A549 (cell line): ENCODE measurements at regions of chr1 and their contacts with region 1.

Region 1: GRCh38 chr1:44652445-44653106 is 21.7 kb downstream of the TMEM53 start:
- DNase-seq: peak; percentile 60 to 65
- ATAC-seq: peak; percentile 77 to 93
- H3K4me3 ChIP-seq: no peak overlapping the region
- H3K27ac ChIP-seq: no peak overlapping the region
- H3K4me1 ChIP-seq: no peaks in the 10 kb centered on the region
- CTCF ChIP-seq: peak; percentile 71
- EP300 ChIP-seq: no peak
- POLR2A ChIP-seq: no peak
- RAD21 ChIP-seq: peak; percentile 78 to 81

Region 2: GRCh38 chr1:44002606-44003157 is 649.9 kb before region 1 on chr1:
- CTCF ChIA-PET with region 1: interaction called, 13 read pairs
- POLR2A ChIA-PET with region 1: no interaction called
- DNase-seq: no peak
- ATAC-seq: no peak
- H3K4me3 ChIP-seq: no peak overlapping the region
- H3K27ac ChIP-seq: no peak overlapping the region
- H3K4me1 ChIP-seq: peaks cover 4% of the 10 kb centered on the region; the same call in 1 of the 3 replicates
- CTCF ChIP-seq: no peak
- EP300 ChIP-seq: no peak
- POLR2A ChIP-seq: no peak
- RAD21 ChIP-seq: no peak

Region 3: GRCh38 chr1:44318097-44319088 is 334.2 kb before region 1 on chr1:
- CTCF ChIA-PET with region 1: interaction called, 11 read pairs
- POLR2A ChIA-PET with region 1: no interaction called
- DNase-seq: peak; percentile 23 to 61
- ATAC-seq: peak in 1 of 2 experiments; percentile 68; a peak in 3 of 6 replicates
- H3K4me3 ChIP-seq: no peak overlapping the region
- H3K27ac ChIP-seq: no peak overlapping the region
- H3K4me1 ChIP-seq: no peaks in the 10 kb centered on the region
- CTCF ChIP-seq: peak; percentile 73
- EP300 ChIP-seq: no peak
- POLR2A ChIP-seq: no peak
- RAD21 ChIP-seq: peak; percentile 48 to 54; a peak in 3 of 5 replicates

Region 4: GRCh38 chr1:44609412-44609767 is 43.2 kb before region 1 on chr1:
- CTCF ChIA-PET with region 1: interaction called, 24 read pairs
- POLR2A ChIA-PET with region 1: interaction called, 3 read pairs
- DNase-seq: peak in 1 of 2 experiments; percentile 30
- ATAC-seq: peak; percentile 55 to 86; a peak in 3 of 6 replicates
- H3K4me3 ChIP-seq: no peak overlapping the region
- H3K27ac ChIP-seq: no peak overlapping the region
- H3K4me1 ChIP-seq: no peaks in the 10 kb centered on the region
- CTCF ChIP-seq: peak; percentile 26; the same call in 1 of the 3 replicates
- EP300 ChIP-seq: no peak
- POLR2A ChIP-seq: no peak
- RAD21 ChIP-seq: peak in 1 of 2 experiments; percentile 45; a peak in 2 of 5 replicates

Region 5: DNA sequence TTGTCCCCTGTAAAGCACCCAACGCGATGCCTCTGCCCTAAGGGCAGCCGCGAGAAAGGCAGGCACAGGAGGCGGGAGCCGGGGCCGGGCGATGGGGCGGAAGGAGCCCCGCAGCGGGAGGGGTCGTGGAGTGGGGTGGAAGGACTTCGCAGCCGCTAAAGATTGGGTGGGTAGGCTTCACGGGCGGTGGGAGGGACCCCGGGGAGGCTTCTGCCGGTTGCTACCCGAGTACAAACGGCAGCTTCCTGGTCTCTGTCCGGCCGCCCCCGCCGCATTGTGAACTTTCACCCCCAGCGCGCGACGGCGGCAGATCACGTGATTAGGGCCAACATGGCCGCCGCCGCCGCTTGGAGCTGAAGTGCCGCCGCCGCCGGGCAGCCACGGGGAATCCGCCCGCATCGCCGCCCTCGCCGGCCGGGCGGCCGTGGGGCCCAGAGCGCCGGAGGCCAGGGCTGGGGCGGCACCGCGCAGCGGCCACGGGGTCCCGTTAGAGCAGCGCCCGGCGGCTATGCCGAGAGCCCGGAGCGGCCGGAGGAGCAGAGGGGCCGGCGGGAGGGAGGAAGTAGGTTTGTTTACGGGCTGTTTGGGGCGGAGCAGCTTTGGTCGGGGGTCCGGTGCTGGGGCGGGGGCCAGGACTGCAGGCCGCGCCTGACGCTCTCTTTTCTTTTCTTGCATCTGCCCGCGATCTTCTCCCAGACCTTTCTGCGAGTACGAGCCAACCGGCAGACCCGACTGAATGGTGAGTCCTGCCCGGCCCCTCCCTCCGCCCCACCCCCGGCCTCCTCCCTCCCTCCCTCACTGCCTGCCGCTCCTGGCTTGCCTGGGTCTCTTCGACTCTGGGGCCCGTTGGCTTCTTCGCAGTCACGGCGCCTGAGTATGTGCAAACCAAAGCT is 20.7 kb before region 1 on chr1:
- CTCF ChIA-PET with region 1: interaction called, 119 read pairs
- POLR2A ChIA-PET with region 1: interaction called, 4 read pairs
- DNase-seq: peak; percentile 74 to 83
- ATAC-seq: peak; percentile 84 to 86
- H3K4me3 ChIP-seq: peak overlapping the region; percentile 77
- H3K27ac ChIP-seq: peak overlapping the region; percentile 97
- H3K4me1 ChIP-seq: peaks cover 18% of the 10 kb centered on the region; the same call in 1 of the 3 replicates
- CTCF ChIP-seq: no peak
- EP300 ChIP-seq: no peak
- POLR2A ChIP-seq: peak; percentile 30
- RAD21 ChIP-seq: no peak

Region 6: GRCh38 chr1:44674113-44675000 is 21.8 kb after region 1 on chr1 and contains the starts of genes ARMH1 and TMEM53:
- CTCF ChIA-PET with region 1: interaction called, 34 read pairs
- POLR2A ChIA-PET with region 1: interaction called, 9 read pairs
- DNase-seq: peak; percentile 96 to 98
- ATAC-seq: peak; percentile 96 to 97
- H3K4me3 ChIP-seq: peak within 1 kb of the TSS; percentile 57
- H3K27ac ChIP-seq: peak within 1 kb of the TSS; percentile 90 to 95
- H3K4me1 ChIP-seq: peaks cover 25% of the 10 kb centered on the region
- CTCF ChIP-seq: no peak
- EP300 ChIP-seq: no peak
- POLR2A ChIP-seq: peak; percentile 54
- RAD21 ChIP-seq: no peak
- polyA plus RNA-seq, gene ARMH1: 2.7 TPM in 2 replicates
- polyA plus RNA-seq, gene TMEM53: 6.2 and 8.9 TPM in 2 replicates

Region 7: DNA sequence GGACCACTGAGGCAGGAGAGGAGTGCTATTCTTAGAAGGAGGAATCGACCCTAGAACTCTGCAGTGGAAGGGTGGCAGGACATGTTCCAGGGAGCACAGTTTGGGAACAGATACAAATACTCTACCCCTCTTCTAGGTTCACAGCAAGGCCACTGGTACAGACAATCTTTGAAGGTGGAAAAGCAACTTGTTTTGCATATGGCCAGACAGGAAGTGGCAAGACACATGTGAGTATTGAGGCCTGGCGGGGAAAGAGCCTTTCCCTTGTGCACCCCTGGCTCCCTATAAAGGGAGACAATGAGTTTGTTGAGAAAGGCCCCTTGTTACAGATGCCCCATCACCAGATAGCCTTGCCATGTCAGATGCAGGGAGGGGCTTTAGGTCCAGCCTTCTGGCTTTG is 104.8 kb after region 1 on chr1:
- CTCF ChIA-PET with region 1: no interaction called
- POLR2A ChIA-PET with region 1: no interaction called
- DNase-seq: no peak
- ATAC-seq: no peak
- H3K4me3 ChIP-seq: no peak overlapping the region
- H3K27ac ChIP-seq: no peak overlapping the region
- H3K4me1 ChIP-seq: no peaks in the 10 kb centered on the region
- CTCF ChIP-seq: no peak
- EP300 ChIP-seq: no peak
- POLR2A ChIP-seq: no peak
- RAD21 ChIP-seq: no peak